Left cardiac atrium (tissue), 4 donors: ENCODE measurements at regions of chr6 and their contacts with region 1.

Region 1: GRCh38 chr6:167778497-167779139 is 48.1 kb upstream of the AFDN start:
- DNase-seq: no peak
- ATAC-seq: no peak

Region 2: GRCh38 chr6:167573461-167574215 is 205.0 kb before region 1 on chr6:
- intact Hi-C with region 1: no loop called
- DNase-seq: no peak
- ATAC-seq: peak; percentile 69 to 85

Region 3: GRCh38 chr6:167678102-167679101 is 100.2 kb before region 1 on chr6:
- intact Hi-C with region 1: loop called in 1 of 2 experiments (anchors 5 kb)
- DNase-seq: no peak
- ATAC-seq: peak; percentile 11 to 42

Region 4: DNA sequence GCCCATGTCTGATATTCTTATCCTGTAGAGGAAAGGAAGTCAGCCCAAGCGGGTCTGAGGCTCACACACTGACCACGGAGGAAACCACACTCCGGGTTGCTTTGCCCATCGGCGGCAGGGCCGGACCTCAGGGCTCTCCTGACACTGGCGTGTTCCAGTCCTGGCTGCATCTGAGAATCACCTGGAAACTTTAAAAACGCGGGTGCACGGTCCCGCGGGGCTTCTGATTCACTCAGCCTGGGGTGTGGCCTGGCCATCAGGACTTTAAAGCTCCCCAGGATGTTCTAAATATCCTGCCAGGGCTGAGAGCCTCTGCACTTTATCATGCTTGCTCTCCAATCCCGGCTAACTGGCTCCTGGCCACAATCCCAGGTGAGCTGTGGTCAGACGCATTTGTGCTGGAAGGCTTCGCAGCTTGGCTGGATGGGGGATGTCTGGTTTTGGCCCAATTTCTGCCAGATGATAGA is 588.7 kb after region 1 on chr6:
- intact Hi-C with region 1: no loop called
- DNase-seq: peak; percentile 19
- ATAC-seq: peak in 1 of 2 donors; percentile 30